ENCODE measurements at regions of chr16 and their contacts with region 1.

Region 1: GRCh38 chr16:3003582-3004302 is 9.0 kb upstream of the CLDN9 start:
- DNase-seq: peak; percentile 99
- H3K4me3 ChIP-seq: peak overlapping the region; percentile 15
- H3K27ac ChIP-seq: no peak overlapping the region
- H3K4me1 ChIP-seq: peaks cover 23% of the 10 kb centered on the region
- CTCF ChIP-seq: peak; percentile 82

Region 2: GRCh38 chr16:2663553-2664546 is 339.9 kb before region 1 on chr16:
- CTCF ChIA-PET with region 1: no interaction called
- POLR2A ChIA-PET with region 1: no interaction called
- intact Hi-C with region 1: no loop called
- DNase-seq: no peak
- H3K4me3 ChIP-seq: no peak overlapping the region
- H3K27ac ChIP-seq: no peak overlapping the region
- H3K4me1 ChIP-seq: no peaks in the 10 kb centered on the region
- CTCF ChIP-seq: no peak

Region 3: DNA sequence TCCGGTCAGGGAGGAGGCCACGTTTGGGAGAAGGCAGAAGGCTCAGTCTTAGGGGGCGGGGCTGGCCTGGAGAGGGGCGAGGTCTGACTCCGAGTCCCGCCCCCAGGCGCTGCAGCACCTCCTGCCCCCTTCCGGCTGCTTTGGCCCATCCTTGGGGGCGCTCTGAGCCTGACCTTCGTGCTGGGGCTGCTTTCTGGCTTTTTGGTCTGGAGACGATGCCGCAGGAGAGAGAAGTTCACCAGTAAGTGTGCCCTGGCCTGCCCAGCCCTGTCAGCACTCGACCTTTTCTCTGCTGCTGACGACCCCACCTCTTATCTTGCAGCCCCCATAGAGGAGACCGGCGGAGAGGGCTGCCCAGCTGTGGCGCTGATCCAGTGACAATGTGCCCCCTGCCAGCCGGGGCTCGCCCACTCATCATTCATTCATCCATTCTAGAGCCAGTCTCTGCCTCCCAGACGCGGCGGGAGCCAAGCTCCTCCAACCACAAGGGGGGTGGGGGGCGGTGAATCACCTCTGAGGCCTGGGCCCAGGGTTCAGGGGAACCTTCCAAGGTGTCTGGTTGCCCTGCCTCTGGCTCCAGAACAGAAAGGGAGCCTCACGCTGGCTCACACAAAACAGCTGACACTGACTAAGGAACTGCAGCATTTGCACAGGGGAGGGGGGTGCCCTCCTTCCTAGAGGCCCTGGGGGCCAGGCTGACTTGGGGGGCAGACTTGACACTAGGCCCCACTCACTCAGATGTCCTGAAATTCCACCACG is 17.9 kb after region 1 on chr16:
- CTCF ChIA-PET with region 1: interaction called, 4 read pairs
- POLR2A ChIA-PET with region 1: interaction called, 7 read pairs
- intact Hi-C with region 1: loop called (anchors 2 kb)
- DNase-seq: peak; percentile 80
- H3K4me3 ChIP-seq: peak overlapping the region; percentile 68
- H3K27ac ChIP-seq: peak overlapping the region; percentile 12
- H3K4me1 ChIP-seq: peaks cover 39% of the 10 kb centered on the region
- CTCF ChIP-seq: peak; percentile 66

Region 4: GRCh38 chr16:3027945-3028712 is 24.4 kb after region 1 on chr16:
- CTCF ChIA-PET with region 1: interaction called, 5 read pairs
- POLR2A ChIA-PET with region 1: interaction called, 4 read pairs
- intact Hi-C with region 1: loop called (anchors 1 kb)
- DNase-seq: peak; percentile 90
- H3K4me3 ChIP-seq: no peak overlapping the region
- H3K27ac ChIP-seq: no peak overlapping the region
- H3K4me1 ChIP-seq: peaks cover 14% of the 10 kb centered on the region
- CTCF ChIP-seq: peak; percentile 76